Naive thymus-derived CD4-positive, alpha-beta T cell (primary cell): ENCODE measurements at regions of chr11 and their contacts with region 1.

Region 1: GRCh38 chr11:94623120-94623735 is 56.1 kb downstream of the PIWIL4 start:
- DNase-seq: peak in 8 of 9 donors; percentile 33 to 68 (median 55)
- ATAC-seq: peak; percentile 91
- H3K4me3 ChIP-seq: no peak overlapping the region
- H3K4me3 Mint-ChIP-seq: no peak overlapping the region
- H3K27ac ChIP-seq: no peak overlapping the region
- H3K27ac Mint-ChIP-seq: peak overlapping the region in 1 of 9 donors; percentile 2
- H3K4me1 ChIP-seq: no peaks in the 10 kb centered on the region
- H3K4me1 Mint-ChIP-seq: peaks cover 0 to 2% (median 0%) of the 10 kb centered on the region in 7 donors
- H3K27me3 ChIP-seq: no peaks in the 10 kb centered on the region
- H3K27me3 Mint-ChIP-seq: peaks cover 5 to 18% (median 13%) of the 10 kb centered on the region in 5 donors

Region 2: DNA sequence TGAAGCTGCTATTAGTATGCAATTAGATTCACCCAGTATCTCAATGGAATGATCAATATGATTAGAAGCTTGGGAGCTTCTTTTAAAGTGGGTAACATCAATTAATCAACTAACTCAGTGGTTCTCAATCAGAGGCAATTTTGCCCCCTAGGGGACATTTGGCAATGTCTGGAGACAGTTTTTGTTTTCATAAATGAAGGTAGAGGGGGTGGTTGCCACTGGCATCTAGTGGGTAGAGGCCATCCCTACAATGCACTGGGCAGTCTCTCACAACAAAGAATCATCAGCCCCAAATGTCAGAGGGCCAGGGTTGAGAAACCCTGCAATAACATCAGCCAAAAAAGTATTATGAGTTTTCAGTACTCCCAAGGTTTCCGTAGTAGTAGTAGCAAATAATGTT is 139.0 kb after region 1 on chr11:
- CTCF ChIA-PET with region 1: no interaction called
- POLR2A ChIA-PET with region 1: no interaction called
- intact Hi-C with region 1: loop called (anchors 5 kb)
- DNase-seq: no peak
- ATAC-seq: no peak
- H3K4me3 ChIP-seq: no peak overlapping the region
- H3K4me3 Mint-ChIP-seq: no peak overlapping the region
- H3K27ac ChIP-seq: no peak overlapping the region
- H3K27ac Mint-ChIP-seq: no peak overlapping the region
- H3K4me1 ChIP-seq: no peaks in the 10 kb centered on the region
- H3K4me1 Mint-ChIP-seq: peaks cover 0 to 4% (median 0%) of the 10 kb centered on the region in 7 donors
- H3K27me3 ChIP-seq: no peaks in the 10 kb centered on the region
- H3K27me3 Mint-ChIP-seq: peaks cover 4 to 38% (median 9%) of the 10 kb centered on the region in 5 donors

Region 3: DNA sequence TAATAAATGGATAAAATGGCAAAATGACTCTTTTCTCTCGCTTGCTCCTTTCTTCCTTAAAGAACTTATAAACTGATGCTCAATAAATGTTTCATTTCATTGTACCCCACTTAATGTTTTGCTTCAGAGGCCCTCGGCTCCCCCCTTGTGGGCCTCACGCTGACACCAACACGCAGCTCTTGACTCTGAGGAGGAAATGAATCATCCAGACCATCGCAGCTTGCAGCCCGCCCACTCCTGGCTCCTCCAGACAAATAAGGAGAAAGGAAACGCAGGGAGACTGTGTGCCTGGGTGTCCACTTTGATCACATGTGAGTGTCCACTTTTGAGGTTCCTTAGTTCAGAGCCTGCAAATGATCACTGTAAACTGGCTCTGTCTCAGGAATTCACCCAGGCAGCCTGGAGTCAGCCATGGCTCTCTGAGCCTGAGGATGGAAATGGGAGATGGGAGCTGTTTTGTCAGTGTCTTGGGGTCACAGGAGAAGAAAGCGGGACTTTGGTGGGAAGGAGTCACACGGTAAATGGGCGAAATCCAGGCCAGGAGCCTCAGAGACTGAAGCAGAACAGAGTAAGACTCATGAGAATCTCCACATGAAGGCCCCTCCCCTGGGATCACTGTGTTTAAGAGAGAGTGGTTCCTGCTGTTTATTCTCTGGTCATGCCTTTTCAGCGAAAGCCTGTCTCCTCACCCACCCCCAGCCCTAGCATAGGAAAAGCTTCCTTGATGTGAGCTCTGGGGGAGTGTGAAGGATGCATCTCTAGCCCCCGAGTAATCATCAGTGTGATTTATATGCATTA is 253.6 kb after region 1 on chr11:
- CTCF ChIA-PET with region 1: no interaction called
- POLR2A ChIA-PET with region 1: no interaction called
- intact Hi-C with region 1: loop called in 1 of 2 experiments (anchors 5 kb)
- DNase-seq: peak in 2 of 9 donors; percentile 7 to 75
- ATAC-seq: peak; percentile 84
- H3K4me3 ChIP-seq: no peak overlapping the region
- H3K4me3 Mint-ChIP-seq: peak overlapping the region in 1 of 10 donors; percentile 69
- H3K27ac ChIP-seq: no peak overlapping the region
- H3K27ac Mint-ChIP-seq: peak overlapping the region in 4 of 9 donors; percentile 28 to 67 (median 55)
- H3K4me1 ChIP-seq: no peaks in the 10 kb centered on the region
- H3K4me1 Mint-ChIP-seq: peaks cover 10 to 22% (median 16%) of the 10 kb centered on the region in 7 donors
- H3K27me3 ChIP-seq: peaks cover 0 to 4% of the 10 kb centered on the region in 2 donors
- H3K27me3 Mint-ChIP-seq: peaks cover 0 to 5% (median 0%) of the 10 kb centered on the region in 5 donors

Region 4: DNA sequence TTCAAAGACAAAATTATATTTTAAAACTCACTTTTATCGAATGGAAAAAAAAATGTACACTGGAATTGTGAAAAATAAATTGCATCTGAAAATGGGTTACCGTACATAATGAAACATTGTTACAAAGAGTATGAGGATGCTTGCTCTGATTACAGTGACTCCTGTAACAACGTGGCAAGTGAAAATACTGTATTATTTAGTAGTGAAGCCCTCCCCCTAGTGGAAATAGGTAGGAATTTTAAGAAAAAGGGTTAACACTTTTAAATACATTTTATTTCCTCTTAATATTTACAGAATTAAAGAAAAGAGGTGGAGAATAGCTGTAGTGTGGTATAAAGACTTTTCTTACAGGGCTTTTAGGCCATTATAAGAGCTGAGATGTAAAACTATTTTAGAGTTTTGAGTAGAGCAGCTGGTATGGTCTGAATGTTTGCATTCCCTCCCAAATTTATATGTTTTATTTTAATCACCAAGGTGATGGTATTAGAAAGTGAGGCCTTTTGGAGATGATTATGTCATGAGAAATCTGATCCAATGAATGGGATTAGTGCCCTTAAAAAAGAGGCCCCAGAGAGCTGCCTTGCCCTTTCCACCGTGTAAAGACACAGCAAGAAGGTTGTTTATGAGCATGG is 1141.2 kb after region 1 on chr11:
- CTCF ChIA-PET with region 1: interaction called, 3 read pairs
- POLR2A ChIA-PET with region 1: no interaction called
- intact Hi-C with region 1: loop called in 1 of 2 experiments (anchors 5 kb)
- DNase-seq: peak in 7 of 9 donors; percentile 43 to 73 (median 68)
- ATAC-seq: peak; percentile 95
- H3K4me3 ChIP-seq: no peak overlapping the region
- H3K4me3 Mint-ChIP-seq: no peak overlapping the region
- H3K27ac ChIP-seq: no peak overlapping the region
- H3K27ac Mint-ChIP-seq: no peak overlapping the region
- H3K4me1 ChIP-seq: no peaks in the 10 kb centered on the region
- H3K4me1 Mint-ChIP-seq: peaks cover 0 to 9% (median 0%) of the 10 kb centered on the region in 7 donors
- H3K27me3 ChIP-seq: no peaks in the 10 kb centered on the region
- H3K27me3 Mint-ChIP-seq: peaks cover 0 to 19% (median 0%) of the 10 kb centered on the region in 5 donors